Adrenal gland (tissue), 19 donors: ENCODE measurements at regions of chr6 and their contacts with region 1.

Region 1: GRCh38 chr6:144013486-144013909 is 5.4 kb upstream of the PLAGL1 start:
- DNase-seq: peak; percentile 72 to 91 (median 85)
- H3K4me3 ChIP-seq: no peak overlapping the region
- H3K27ac ChIP-seq: no peak overlapping the region
- H3K4me1 ChIP-seq: no peaks in the 10 kb centered on the region
- H3K27me3 ChIP-seq: no peaks in the 10 kb centered on the region
- CTCF ChIP-seq: peak; percentile 76 to 96 (median 94)
- POLR2A ChIP-seq: no peak

Region 2: DNA sequence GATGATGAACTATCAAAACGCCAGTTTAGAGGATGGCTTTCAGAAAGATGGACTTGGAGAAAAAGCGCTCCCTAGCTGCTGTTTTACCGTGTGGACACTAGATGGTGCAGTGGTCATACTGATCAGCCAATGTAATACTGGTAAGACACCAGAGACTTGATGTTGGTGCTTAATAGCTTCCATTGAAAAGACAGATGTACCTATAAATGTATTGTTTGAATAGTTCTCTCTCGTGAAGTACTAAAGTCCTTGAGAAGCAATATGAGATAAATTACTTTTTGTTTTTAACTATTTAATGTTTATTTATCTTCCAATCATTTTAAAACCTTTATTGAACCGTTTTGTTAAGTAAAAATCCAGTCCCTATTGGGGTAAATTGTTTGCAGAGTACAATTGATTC is 438.1 kb before region 1 on chr6:
- intact Hi-C with region 1: loop called (anchors 5 kb)
- DNase-seq: peak; percentile 49 to 86 (median 65)
- H3K4me3 ChIP-seq: no peak overlapping the region
- H3K27ac ChIP-seq: no peak overlapping the region
- H3K4me1 ChIP-seq: peaks cover 7 to 11% of the 10 kb centered on the region in 2 donors
- H3K27me3 ChIP-seq: no peaks in the 10 kb centered on the region
- CTCF ChIP-seq: peak; percentile 81 to 96 (median 95)
- POLR2A ChIP-seq: no peak

Region 3: DNA sequence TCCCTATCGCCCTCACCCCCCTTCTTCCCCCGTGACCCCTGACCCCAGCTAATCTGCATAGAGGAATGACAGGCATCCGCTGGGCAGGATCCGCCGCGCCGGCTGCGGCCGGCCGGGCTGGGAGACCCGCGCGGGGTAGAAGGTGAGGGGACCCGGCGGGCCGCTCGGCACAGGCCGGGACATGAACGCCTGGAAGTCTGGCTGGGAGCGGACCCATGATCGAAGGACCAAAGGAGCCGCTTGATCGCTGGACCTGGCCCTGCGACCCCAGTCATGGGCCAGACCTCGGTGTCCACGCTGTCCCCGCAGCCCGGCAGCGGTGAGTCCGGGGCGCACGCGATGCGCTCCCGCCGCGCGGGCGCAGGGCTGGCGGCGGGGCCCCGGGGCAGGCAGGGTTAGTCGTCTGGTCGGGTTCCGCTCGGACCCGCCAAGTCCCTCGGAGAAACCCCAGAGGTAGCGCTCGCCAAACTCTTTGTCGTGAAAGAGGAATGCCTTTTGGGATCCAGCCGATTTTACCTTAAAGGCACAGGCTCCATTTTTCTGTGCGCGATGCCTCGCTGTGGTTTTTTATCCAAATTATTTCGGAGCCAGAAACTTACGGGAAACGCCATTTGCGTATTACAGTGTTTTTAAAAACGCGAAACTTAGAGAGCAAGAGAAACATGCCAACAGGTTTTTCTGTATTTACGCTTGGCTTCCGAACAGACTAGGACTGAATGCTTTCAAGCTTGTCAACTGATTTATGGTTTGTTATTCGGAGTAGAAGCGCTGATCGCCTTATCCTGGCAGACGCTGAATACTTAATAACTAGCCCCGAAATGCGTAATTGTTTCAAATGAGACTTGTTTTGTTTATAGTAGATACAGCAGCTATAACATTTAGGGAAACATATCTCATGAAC is 335.4 kb before region 1 on chr6 and contains the start of gene PHACTR2:
- intact Hi-C with region 1: loop called in 1 of 2 experiments (anchors 10 kb)
- DNase-seq: peak; percentile 79 to 88 (median 85)
- H3K4me3 ChIP-seq: peak within 1 kb of the TSS; percentile 79 to 98 (median 82)
- H3K27ac ChIP-seq: peak within 1 kb of the TSS; percentile 86 to 97 (median 96)
- H3K4me1 ChIP-seq: peaks cover 3 to 37% of the 10 kb centered on the region in 2 donors
- H3K27me3 ChIP-seq: no peaks in the 10 kb centered on the region
- CTCF ChIP-seq: no peak
- POLR2A ChIP-seq: peak in 1 of 2 donors; percentile 80
- total RNA-seq, gene PHACTR2: 118 to 315 (median 241) TPM

Region 4: DNA sequence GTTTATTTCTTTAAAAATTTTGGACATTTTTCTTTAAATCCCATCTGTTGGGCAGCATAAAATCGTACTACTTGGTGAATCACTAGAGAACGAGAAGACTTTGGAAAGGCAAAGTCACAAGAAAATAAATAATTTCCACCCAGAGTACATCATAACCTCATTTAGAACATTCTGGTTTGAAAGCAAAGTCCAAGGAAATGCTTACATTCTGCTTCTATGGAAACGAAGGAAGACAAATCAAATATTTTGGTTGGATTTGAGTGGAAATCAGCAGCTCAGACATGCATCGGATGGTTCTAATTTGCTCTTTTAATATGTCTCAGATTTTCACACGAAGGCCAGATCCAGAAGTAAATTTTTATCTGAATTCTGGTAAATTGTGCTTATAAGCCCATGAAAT is 231.0 kb before region 1 on chr6:
- intact Hi-C with region 1: no loop called
- DNase-seq: no peak
- H3K4me3 ChIP-seq: no peak overlapping the region
- H3K27ac ChIP-seq: no peak overlapping the region
- H3K4me1 ChIP-seq: peaks cover 0 to 4% of the 10 kb centered on the region in 2 donors
- H3K27me3 ChIP-seq: no peaks in the 10 kb centered on the region
- CTCF ChIP-seq: no peak
- POLR2A ChIP-seq: no peak

Region 5: GRCh38 chr6:143940011-143940597 is 73.4 kb before region 1 on chr6:
- intact Hi-C with region 1: loop called (anchors 2 to 5 kb)
- DNase-seq: peak; percentile 35 to 62 (median 55)
- H3K4me3 ChIP-seq: no peak overlapping the region
- H3K27ac ChIP-seq: no peak overlapping the region
- H3K4me1 ChIP-seq: no peaks in the 10 kb centered on the region
- H3K27me3 ChIP-seq: no peaks in the 10 kb centered on the region
- CTCF ChIP-seq: peak; percentile 51 to 82 (median 69)
- POLR2A ChIP-seq: no peak

Region 6: GRCh38 chr6:143999406-143999805 is 14.1 kb before region 1 on chr6:
- intact Hi-C with region 1: loop called in 1 of 2 experiments (anchors 2 kb)
- DNase-seq: peak in 5 of 7 donors; percentile 29 to 72 (median 68)
- H3K4me3 ChIP-seq: no peak overlapping the region
- H3K27ac ChIP-seq: no peak overlapping the region
- H3K4me1 ChIP-seq: no peaks in the 10 kb centered on the region
- H3K27me3 ChIP-seq: no peaks in the 10 kb centered on the region
- CTCF ChIP-seq: no peak
- POLR2A ChIP-seq: no peak

Region 7: DNA sequence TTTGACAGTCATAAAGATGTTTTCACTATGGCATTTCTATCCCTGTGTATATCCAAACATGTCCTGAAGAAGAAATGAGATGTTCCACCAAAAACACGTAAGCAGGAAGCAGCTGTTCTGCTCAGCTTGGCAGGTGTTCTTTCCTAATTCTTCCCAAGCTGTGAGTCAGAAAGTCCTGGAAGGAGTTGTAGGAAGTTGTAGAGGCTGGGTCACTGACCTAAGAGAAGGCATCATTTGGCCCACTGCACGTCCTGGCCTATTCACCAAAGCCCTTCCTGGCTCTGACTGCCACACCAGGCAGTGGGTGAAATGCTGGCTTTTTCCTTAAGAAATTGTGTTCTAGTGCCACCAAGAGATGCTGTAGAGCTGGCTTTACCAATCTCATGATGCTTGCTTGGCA is 177.1 kb after region 1 on chr6:
- intact Hi-C with region 1: no loop called
- DNase-seq: peak in 6 of 7 donors; percentile 38 to 76 (median 58)
- H3K4me3 ChIP-seq: no peak overlapping the region
- H3K27ac ChIP-seq: no peak overlapping the region
- H3K4me1 ChIP-seq: no peaks in the 10 kb centered on the region
- H3K27me3 ChIP-seq: no peaks in the 10 kb centered on the region
- CTCF ChIP-seq: no peak
- POLR2A ChIP-seq: no peak